Gastrocnemius medialis (tissue), 4 donors: ENCODE measurements at regions of chr15 and their contacts with region 1.

Region 1: DNA sequence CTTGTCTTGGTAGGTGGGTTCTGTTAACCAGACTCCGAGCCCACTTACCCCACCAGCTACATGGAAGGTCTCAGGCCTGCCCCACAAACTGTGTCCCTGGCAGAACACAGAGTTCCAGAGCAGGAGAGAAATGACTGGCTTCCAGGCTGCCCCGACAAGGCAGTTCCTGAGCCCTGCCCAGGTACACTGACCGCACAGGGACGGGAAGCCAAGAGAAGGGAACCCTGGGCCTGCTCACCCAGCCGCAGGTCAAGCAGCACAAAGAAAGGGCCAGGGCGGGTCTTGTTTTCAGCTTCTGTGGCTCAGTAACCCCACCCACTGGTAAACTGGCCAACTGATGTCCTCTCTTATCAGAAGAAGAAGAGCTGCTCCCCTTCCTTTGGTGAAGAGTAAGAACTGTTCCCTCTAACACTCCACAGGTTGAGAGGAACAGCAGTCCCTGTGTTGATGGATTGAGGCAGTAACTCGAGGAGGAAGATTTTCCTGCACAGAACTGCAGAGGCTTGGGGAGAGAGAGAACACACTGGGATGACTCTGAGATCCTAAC is 68.4 kb downstream of the CRTC3 start:
- DNase-seq: peak; percentile 67 to 86
- ATAC-seq: peak; percentile 74 to 75
- H3K4me3 ChIP-seq: peak overlapping the region in 1 of 4 donors; percentile 32
- H3K27ac ChIP-seq: peak overlapping the region; percentile 58 to 83 (median 74)
- H3K4me1 ChIP-seq: peaks cover 42 to 55% of the 10 kb centered on the region in 2 donors
- H3K27me3 ChIP-seq: no peaks in the 10 kb centered on the region
- CTCF ChIP-seq: no peak
- POLR2A ChIP-seq: no peak

Region 2: DNA sequence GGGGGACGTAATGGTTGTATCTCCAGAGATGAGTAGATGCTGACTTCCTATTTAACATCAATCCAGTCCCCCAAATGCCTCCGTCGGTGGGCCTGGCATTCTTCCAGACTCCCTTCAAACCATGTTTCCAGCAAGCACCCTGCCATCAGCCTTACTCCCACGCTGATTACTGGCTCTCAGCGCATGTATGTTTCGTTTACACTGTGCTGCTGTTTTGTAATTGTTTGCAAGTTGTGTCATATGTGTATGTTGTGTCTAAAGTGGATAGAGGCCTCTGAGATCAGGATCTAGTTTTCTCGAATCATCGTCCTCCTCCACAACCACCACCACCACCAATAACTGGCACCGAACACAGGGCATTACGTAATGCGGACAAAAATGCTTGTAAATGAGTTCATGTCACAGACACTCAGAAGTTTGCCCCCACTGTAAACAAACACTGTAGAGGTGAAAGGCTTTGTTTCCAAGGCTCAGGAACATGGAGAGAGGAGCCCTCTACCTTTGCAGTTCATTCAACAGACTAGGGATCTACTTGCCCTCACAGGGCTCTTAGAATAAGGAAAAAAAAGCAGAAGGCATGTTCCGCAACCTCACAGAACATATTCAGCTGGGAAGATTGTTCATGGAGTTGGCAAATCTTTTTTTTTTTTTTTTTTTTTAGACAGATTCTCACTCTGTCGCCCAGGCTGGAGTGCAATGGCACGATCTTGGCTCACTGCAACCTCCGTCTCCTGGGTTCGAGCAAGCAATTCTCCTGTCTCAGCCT is 443.1 kb before region 1 on chr15:
- in situ Hi-C with region 1: no loop called
- intact Hi-C with region 1: no loop called
- DNase-seq: no peak
- ATAC-seq: no peak
- H3K4me3 ChIP-seq: no peak overlapping the region
- H3K27ac ChIP-seq: no peak overlapping the region
- H3K4me1 ChIP-seq: peaks cover 7 to 15% of the 10 kb centered on the region in 2 donors
- H3K27me3 ChIP-seq: no peaks in the 10 kb centered on the region
- CTCF ChIP-seq: no peak
- POLR2A ChIP-seq: no peak

Region 3: DNA sequence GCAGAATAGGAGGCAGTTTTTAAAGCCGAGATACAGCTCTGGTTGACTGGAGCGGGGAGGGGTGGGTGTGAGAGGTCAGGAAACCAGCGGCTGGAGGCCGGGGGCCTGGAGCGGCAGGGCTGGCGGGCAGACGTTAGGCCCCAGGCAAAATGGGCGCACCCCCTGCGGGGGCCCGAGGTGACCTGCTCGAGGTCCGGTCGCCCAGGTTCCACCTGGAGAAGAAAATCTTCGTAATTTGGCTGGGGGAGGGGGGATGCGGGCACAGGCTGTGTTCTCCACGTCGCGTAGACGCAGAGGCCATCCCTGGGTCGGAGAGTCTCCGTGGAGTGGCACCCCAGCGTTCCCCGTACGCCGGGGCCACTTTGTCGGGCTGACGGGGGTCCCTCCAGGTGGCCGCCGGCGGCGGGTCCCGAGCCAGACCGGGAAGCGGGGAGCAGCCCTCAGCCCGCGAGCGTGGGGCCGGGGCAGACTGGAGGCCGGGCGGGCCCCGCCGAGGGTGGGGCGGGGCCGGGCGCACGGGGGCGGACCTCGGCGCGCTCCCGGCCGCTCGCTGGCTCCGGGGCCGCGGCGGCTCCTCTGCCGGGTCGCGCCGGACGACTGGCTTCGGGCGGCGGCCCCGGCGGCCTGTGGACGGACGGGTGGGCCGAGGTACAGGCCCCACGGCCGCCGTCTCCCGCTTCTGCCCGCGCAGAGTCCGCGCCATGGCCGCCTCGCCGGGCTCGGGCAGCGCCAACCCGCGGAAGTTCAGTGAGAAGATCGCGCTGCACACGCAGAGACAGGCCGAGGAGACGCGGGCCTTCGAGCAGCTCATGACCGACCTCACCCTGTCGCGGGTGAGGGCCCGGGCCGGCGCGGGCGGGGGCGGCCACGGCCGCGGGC is 68.5 kb before region 1 on chr15 and contains the start of gene CRTC3:
- in situ Hi-C with region 1: no loop called
- intact Hi-C with region 1: loop called (anchors 5 kb)
- DNase-seq: peak; percentile 14 to 39
- ATAC-seq: peak; percentile 79 to 80
- H3K4me3 ChIP-seq: peak within 1 kb of the TSS; percentile 73 to 98 (median 83)
- H3K27ac ChIP-seq: peak within 1 kb of the TSS; percentile 76 to 94 (median 90)
- H3K4me1 ChIP-seq: peaks cover 17 to 20% of the 10 kb centered on the region in 2 donors
- H3K27me3 ChIP-seq: no peaks in the 10 kb centered on the region
- CTCF ChIP-seq: peak in 2 of 5 experiments; percentile 12 to 19
- POLR2A ChIP-seq: peak; percentile 62 to 66
- total RNA-seq, gene CRTC3: 20.7 to 41.4 (median 30.5) TPM

Region 4: GRCh38 chr15:90660195-90660998 is 62.3 kb after region 1 on chr15:
- in situ Hi-C with region 1: no loop called
- intact Hi-C with region 1: no loop called
- DNase-seq: peak; percentile 89 to 91
- ATAC-seq: peak; percentile 84 to 85
- H3K4me3 ChIP-seq: peak overlapping the region; percentile 31 to 58 (median 55)
- H3K27ac ChIP-seq: peak overlapping the region; percentile 92 to 100 (median 98)
- H3K4me1 ChIP-seq: peaks cover 34 to 51% of the 10 kb centered on the region in 2 donors
- H3K27me3 ChIP-seq: no peaks in the 10 kb centered on the region
- CTCF ChIP-seq: no peak
- POLR2A ChIP-seq: peak; percentile 46 to 75

Region 5: GRCh38 chr15:90710436-90711027 is 112.4 kb after region 1 on chr15:
- in situ Hi-C with region 1: no loop called
- intact Hi-C with region 1: no loop called
- DNase-seq: no peak
- ATAC-seq: peak in 1 of 2 donors; percentile 16
- H3K4me3 ChIP-seq: no peak overlapping the region
- H3K27ac ChIP-seq: no peak overlapping the region
- H3K4me1 ChIP-seq: no peaks in the 10 kb centered on the region
- H3K27me3 ChIP-seq: no peaks in the 10 kb centered on the region
- CTCF ChIP-seq: no peak
- POLR2A ChIP-seq: no peak